Ascending aorta (tissue), 2 donors: ENCODE measurements at regions of chr2 and their contacts with region 1.

Region 1: GRCh38 chr2:64644177-64645004 is 9.3 kb downstream of the SERTAD2 start:
- DNase-seq: peak in 1 of 2 donors; percentile 88
- H3K4me3 ChIP-seq: peak overlapping the region; percentile 60 to 62
- H3K27ac ChIP-seq: peak overlapping the region; percentile 79 to 84
- H3K4me1 ChIP-seq: peaks cover 0 to 23% of the 10 kb centered on the region in 2 donors
- H3K27me3 ChIP-seq: no peaks in the 10 kb centered on the region
- CTCF ChIP-seq: no peak

Region 2: DNA sequence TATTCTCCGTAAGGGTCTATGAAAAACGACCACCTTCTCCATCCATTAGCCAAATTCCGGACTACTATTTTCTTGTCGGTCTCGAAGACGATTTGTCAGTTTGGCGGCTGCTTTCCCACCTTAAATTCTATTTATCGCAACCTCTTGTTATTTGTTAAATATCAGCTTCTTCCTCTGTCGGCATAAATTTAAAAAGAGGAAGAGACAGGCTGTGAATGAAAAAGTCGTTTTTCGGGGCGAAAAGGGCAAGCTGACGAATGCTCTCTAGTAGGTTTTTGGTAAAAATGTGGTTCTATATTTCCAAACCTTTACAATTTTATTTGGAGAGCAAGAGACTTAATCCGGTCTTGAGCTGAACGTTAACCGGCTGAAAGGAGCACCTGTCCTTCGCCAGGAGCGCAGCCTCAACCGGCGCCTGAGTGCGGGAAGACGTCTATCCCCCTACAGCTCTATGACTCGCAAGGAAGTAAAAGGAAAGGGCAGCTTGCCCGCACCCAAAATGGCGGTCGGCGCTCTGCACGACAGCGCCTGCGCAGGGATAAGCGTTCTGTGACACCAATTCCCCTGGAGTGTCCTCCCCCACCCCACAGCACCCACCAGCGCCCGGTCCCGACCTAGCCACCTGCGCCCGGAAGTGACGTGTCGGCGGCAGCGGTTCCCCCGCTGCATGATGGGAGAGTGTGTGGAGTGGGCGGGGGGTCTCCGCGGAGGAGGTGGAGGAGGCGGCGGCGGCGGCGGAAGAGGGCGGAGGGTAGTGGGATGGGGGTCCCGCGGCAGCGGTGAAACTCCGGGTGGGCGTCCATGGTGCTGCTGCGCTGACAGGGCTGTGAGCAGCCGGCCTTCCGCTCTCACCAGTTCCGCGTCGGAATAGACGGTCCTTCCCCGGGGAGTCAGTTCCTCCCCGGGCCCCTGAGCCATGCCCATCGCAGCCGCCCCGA is 120.5 kb before region 1 on chr2 and contains the start of gene AFTPH:
- intact Hi-C with region 1: no loop called
- DNase-seq: peak; percentile 98 to 99
- H3K4me3 ChIP-seq: peak within 1 kb of the TSS; percentile 64 to 99
- H3K27ac ChIP-seq: peak within 1 kb of the TSS; percentile 93 to 98
- H3K4me1 ChIP-seq: peaks cover 0 to 2% of the 10 kb centered on the region in 2 donors
- H3K27me3 ChIP-seq: no peaks in the 10 kb centered on the region
- CTCF ChIP-seq: no peak
- total RNA-seq, gene AFTPH: 58.0 TPM

Region 3: GRCh38 chr2:64622443-64623241 is 21.7 kb before region 1 on chr2:
- intact Hi-C with region 1: no loop called
- DNase-seq: no peak
- H3K4me3 ChIP-seq: no peak overlapping the region
- H3K27ac ChIP-seq: no peak overlapping the region
- H3K4me1 ChIP-seq: no peaks in the 10 kb centered on the region
- H3K27me3 ChIP-seq: no peaks in the 10 kb centered on the region
- CTCF ChIP-seq: peak in 1 of 3 experiments; percentile 23

Region 4: GRCh38 chr2:64865073-64865830 is 220.9 kb after region 1 on chr2:
- intact Hi-C with region 1: loop called (anchors 1 kb)
- DNase-seq: peak in 1 of 2 donors; percentile 84
- H3K4me3 ChIP-seq: peak overlapping the region; percentile 71 to 75
- H3K27ac ChIP-seq: peak overlapping the region; percentile 80 to 82
- H3K4me1 ChIP-seq: peaks cover 0 to 4% of the 10 kb centered on the region in 2 donors
- H3K27me3 ChIP-seq: no peaks in the 10 kb centered on the region
- CTCF ChIP-seq: peak; percentile 41 to 98 (median 47)